ENCODE measurements at regions of chr4 and their contacts with region 1.

Region 1: DNA sequence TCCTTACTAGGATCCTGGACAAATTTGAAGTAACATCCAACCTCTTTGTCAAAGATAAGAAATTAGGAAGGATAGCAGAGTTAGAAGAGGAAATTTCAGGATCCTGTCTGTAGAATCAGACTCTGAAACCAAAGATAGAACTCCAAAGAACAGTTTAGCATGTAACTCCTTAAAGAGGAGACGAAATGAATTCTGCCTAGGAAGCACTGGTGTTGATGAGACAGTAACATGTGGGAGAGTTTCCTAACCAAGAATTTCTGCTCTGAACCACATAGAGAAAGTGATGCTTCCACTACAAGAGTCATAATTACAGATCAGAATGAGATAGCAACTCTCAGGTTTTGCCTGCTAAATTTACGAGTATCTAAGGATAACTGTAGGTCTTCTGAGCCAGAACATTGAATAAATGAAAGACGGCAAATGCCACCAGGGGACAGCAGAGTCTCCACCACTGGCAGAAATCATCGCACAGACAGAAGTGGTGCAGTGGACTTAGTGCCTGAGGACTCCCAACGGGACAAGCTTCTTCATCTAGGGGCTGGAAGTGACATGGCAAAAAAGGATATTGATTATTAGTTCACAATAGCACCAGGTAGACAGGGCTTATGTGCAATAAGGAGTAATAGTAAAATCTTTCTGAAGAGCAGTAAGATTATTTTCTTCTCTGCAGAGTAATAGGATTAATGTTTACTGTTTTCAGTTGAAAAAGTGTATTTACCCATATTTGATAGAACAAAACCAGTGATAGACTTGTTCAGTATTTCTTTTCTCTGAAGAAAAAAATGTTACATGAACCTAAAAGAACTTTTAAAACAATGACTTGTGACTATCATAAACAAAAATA is 6.7 kb upstream of the PPID start:
- DNase-seq: peak; percentile 39
- H3K4me3 ChIP-seq: no peak overlapping the region
- H3K27ac ChIP-seq: no peak overlapping the region
- H3K4me1 ChIP-seq: no peaks in the 10 kb centered on the region
- CTCF ChIP-seq: peak; percentile 75

Region 2: DNA sequence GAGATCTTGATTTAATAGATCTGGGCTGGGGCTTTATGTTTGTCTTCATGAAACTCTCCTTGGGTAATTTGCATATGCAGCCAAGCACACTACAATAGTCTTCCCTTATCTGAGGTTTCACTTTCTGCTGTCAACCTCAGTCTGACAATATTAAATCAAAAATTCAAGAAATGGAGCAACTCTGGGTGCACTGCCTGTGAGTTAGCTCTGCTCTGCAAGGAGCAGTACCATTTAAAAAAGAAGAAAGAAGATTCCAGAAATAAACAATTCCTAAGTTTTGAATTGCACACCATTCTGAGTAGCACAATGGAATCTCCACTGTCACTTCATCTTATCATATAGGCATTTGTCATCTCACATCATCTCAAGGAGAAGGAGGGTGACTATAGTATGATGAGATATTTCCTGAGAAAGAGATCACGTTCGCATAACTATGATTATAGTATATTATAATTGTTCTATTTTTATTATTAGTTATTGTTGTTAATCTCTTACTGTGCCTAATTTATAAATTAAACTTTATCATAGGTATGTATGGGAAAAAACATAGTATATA is 48.3 kb after region 1 on chr4:
- CTCF ChIA-PET with region 1: no interaction called
- POLR2A ChIA-PET with region 1: no interaction called
- intact Hi-C with region 1: no loop called
- DNase-seq: peak; percentile 32
- H3K4me3 ChIP-seq: peak overlapping the region; percentile 21
- H3K27ac ChIP-seq: no peak overlapping the region
- H3K4me1 ChIP-seq: peaks cover 13% of the 10 kb centered on the region
- CTCF ChIP-seq: no peak

Region 3: DNA sequence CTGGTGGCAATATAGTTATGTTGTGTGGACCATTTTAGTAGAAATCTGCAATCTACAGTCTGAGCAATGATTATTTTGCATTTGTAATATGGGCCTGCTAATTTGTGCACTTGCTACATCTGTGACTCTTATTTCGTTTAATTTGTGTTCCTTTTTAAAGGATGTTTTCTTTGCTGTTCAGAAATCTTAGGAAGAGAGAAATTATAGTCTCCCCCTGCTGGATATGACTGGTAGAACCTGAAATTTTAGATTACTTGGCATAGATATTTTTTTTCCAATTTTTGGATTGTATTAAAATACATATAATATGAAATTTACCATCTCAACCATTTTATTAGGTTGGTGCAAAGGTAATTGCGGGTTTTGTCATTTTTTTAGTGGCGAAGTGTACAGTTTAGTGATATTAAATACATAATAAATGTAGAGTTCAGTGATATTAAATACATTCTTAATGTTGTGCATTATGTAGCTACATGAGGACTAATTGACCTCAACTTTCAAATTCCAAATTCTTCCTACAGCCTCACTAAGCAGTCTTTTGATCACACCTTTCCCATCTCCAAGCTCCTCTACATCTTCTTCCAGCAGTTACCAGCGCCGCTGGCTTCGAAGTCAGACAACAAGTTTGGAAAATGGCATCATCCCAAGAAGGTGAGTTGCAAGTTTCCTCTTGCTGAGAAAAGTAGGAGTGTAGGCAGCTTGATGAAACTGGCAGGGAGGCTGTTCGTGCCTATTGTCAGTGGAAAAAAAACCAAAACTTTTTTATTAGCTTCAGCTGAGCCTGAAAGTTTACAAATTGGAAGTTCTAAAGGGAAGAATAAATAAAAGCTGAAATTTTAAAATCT is 121.1 kb after region 1 on chr4:
- CTCF ChIA-PET with region 1: no interaction called
- POLR2A ChIA-PET with region 1: no interaction called
- intact Hi-C with region 1: loop called (anchors 2 kb)
- DNase-seq: peak; percentile 25
- H3K4me3 ChIP-seq: no peak overlapping the region
- H3K27ac ChIP-seq: no peak overlapping the region
- H3K4me1 ChIP-seq: no peaks in the 10 kb centered on the region
- CTCF ChIP-seq: peak; percentile 89

Region 4: GRCh38 chr4:159201168-159201567 is 471.2 kb after region 1 on chr4:
- CTCF ChIA-PET with region 1: no interaction called
- POLR2A ChIA-PET with region 1: no interaction called
- intact Hi-C with region 1: loop called (anchors 5 kb)
- DNase-seq: no peak
- H3K4me3 ChIP-seq: no peak overlapping the region
- H3K27ac ChIP-seq: no peak overlapping the region
- H3K4me1 ChIP-seq: peaks cover 6% of the 10 kb centered on the region
- CTCF ChIP-seq: no peak